Activated CD8-positive, alpha-beta memory T cell treated with anti-CD3 and anti-CD28 coated beads, Interleukin-2, amount 10 ng/mL, durations not matched to agents 7 days and 5 days (primary cell): ENCODE measurements at regions of chr12 and their contacts with region 1.

Region 1: GRCh38 chr12:9340422-9341259 is 132.4 kb upstream of the PZP start:
- DNase-seq: peak; percentile 39
- ATAC-seq: peak; percentile 46
- H3K4me3 Mint-ChIP-seq: no peak overlapping the region
- H3K27ac Mint-ChIP-seq: peak overlapping the region; percentile 26
- H3K4me1 Mint-ChIP-seq: peaks cover 35% of the 10 kb centered on the region
- H3K27me3 Mint-ChIP-seq: no peaks in the 10 kb centered on the region

Region 2: DNA sequence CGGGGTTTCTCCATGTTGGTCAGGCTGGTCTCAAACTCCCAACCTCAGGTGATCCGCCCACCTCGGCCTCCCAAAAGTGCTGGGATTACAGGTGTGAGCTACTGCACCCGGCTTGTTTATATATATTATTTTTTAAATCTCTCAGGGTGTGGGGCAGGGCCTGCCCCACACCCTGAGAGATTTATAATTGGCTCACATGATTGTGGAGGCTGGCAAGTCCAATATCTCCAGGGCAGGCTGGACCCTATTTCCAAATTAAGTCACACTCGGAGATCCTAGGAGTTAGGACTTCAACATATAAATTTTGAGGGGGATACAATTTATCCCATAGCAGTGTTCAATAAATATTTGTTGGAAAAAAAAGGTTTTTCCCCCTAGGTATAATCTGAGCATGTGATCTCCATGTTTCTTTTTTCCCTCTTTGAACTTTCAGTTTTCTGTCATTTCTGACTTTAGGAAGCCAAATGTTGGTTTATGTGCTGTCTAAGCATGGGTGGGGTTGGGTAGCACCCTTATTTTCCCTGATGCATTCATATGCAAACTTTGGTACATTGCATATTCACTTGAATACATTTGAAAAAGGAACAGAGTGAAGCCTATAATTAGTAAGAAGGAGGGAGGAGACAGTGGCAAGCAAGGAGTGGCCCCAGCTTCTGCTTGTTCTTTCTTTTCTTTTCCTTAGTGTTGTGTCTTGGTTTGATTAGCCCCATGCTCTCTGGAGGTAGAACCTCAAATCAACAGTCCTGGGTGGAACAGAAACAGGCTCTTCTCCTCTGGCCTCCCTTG is 526.9 kb before region 1 on chr12:
- CTCF ChIA-PET with region 1: no interaction called
- DNase-seq: no peak
- ATAC-seq: no peak
- H3K4me3 Mint-ChIP-seq: no peak overlapping the region
- H3K27ac Mint-ChIP-seq: no peak overlapping the region
- H3K4me1 Mint-ChIP-seq: no peaks in the 10 kb centered on the region
- H3K27me3 Mint-ChIP-seq: no peaks in the 10 kb centered on the region

Region 3: DNA sequence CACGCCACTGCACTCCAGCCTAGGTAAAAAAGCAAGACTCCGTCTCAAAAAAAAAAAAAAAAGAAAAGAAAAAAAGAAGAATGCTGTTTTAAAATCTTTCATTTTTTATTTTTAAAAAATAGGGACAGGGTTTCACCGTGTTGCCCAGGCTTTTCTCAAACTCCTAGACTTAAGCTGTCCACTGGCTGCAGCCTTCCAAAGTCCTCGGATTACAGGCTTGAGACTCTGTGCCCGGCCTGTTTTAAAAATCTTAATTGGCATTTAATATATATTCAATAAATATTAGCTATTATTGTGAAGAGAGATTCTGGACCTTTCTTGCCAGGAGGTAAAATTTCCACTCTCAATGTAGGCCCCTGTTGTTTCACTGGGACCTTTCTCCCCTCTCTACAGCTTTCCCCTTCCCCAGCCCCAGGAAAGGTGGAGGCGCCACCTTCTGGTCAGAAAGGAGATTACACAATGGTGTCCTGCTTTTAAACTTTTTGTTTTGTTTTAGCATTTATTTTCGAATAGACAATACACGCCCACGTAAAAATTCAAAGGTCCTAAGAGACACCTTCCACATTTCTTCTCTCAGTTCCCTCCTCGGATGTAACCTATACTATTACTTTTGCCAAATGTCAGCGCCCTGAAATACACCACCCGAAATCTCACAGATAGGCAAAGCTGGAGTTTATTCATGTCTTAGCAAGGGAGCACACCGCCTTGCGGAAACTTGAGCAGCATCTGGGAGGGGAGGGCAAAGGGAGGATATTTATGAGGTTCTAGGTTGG is 450.1 kb before region 1 on chr12:
- CTCF ChIA-PET with region 1: no interaction called
- DNase-seq: peak; percentile 67
- ATAC-seq: peak; percentile 55
- H3K4me3 Mint-ChIP-seq: peak overlapping the region; percentile 73
- H3K27ac Mint-ChIP-seq: no peak overlapping the region
- H3K4me1 Mint-ChIP-seq: peaks cover 5% of the 10 kb centered on the region
- H3K27me3 Mint-ChIP-seq: peaks cover 19% of the 10 kb centered on the region

Region 4: DNA sequence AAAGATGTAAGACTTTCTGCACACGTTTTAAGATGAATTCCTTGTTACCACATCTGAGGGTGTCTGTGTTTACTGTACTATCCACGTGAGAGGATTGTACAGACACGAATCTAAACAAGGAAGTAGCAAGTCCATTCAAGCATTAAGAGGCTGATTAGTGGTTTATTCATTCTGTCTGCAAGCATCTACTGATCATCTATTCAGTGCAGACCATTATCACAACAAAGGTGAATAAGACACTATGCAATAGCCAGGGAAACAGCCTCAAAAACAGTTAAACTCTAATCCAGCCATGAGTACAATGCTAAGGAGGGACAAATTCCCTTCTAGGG is 20.8 kb before region 1 on chr12:
- CTCF ChIA-PET with region 1: no interaction called
- DNase-seq: no peak
- ATAC-seq: no peak
- H3K4me3 Mint-ChIP-seq: no peak overlapping the region
- H3K27ac Mint-ChIP-seq: no peak overlapping the region
- H3K4me1 Mint-ChIP-seq: no peaks in the 10 kb centered on the region
- H3K27me3 Mint-ChIP-seq: no peaks in the 10 kb centered on the region

Region 5: DNA sequence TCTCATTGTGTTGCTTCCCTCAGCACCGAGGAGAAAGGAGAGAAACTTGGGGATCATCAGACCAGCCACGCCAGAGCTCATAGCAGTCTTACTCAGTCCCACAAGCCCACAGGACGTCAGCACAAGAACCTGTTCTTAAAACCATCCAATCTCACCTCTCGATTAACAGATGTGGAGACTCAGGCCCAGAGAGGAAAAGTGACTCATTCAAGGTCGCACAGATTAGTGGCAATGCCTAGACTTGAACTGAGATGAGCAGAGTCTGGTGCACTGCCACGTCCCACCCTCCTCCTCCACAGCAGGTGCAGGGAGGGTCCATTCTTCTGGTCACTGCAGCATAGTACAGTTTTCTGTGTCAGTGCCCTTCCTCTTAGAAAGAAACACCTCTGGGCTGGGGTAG is 22.5 kb after region 1 on chr12:
- CTCF ChIA-PET with region 1: interaction called, 14 read pairs
- DNase-seq: peak; percentile 80
- ATAC-seq: peak; percentile 63
- H3K4me3 Mint-ChIP-seq: peak overlapping the region; percentile 52
- H3K27ac Mint-ChIP-seq: peak overlapping the region; percentile 84
- H3K4me1 Mint-ChIP-seq: peaks cover 62% of the 10 kb centered on the region
- H3K27me3 Mint-ChIP-seq: peaks cover 12% of the 10 kb centered on the region